HepG2 (cell line): ENCODE measurements at regions of chr1 and their contacts with region 1.

Region 1: DNA sequence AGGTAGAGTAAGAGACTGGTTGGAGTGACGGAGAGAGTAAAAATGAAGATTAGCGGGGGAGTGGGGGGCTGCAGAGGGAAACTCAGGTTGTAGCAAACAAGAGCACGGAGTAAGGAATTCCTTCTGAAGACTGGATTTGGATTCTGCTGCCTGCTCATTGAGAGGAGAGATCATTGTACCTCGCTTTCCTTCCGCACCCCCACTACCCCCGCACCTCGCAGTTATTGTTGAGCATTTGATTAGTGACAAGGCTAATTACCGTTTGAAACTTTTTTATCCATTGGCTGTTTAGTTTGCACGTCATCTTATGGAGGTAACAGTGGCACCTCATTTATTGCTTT is 463 bp downstream of the PRPF3 start:
- DNase-seq: no peak
- ATAC-seq: no peak
- H3K4me3 ChIP-seq: peak overlapping the region; percentile 83 to 92 (median 85)
- H3K27ac ChIP-seq: peak overlapping the region; percentile 84
- H3K4me1 ChIP-seq: peaks cover 20% of the 10 kb centered on the region
- H3K27me3 ChIP-seq: no peaks in the 10 kb centered on the region; a peak in 1 of 5 replicates
- CTCF ChIP-seq: no peak
- EP300 ChIP-seq: no peak
- POLR2A ChIP-seq: no peak
- RAD21 ChIP-seq: no peak

Region 2: DNA sequence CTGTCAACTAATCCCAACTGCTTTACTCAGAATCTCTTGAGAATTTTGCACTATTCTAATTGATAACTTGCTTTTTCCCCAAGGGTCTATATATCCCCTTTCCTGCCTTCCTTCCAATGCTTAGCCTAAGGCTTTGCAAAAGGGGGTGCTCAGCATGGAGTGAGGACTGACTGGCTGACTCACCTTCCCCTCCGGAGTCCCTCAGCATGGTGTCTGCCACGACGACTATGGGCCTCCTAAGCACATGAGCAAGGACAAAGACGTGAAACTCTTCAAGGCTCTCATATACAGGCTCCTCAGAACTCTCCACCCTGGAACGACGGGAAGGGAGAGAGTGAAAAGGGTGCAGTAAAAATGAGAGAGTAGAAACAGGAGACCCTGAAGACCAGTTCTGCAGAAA is 371.9 kb before region 1 on chr1:
- CTCF ChIA-PET with region 1: no interaction called
- POLR2A ChIA-PET with region 1: no interaction called
- in situ Hi-C with region 1: no loop called
- intact Hi-C with region 1: no loop called
- DNase-seq: no peak
- ATAC-seq: no peak
- H3K4me3 ChIP-seq: no peak overlapping the region
- H3K27ac ChIP-seq: no peak overlapping the region
- H3K4me1 ChIP-seq: no peaks in the 10 kb centered on the region
- H3K27me3 ChIP-seq: no peaks in the 10 kb centered on the region
- CTCF ChIP-seq: no peak
- EP300 ChIP-seq: no peak
- POLR2A ChIP-seq: no peak
- RAD21 ChIP-seq: no peak

Region 3: GRCh38 chr1:150268705-150269403 is 52.9 kb before region 1 on chr1 and contains the start of gene APH1A:
- CTCF ChIA-PET with region 1: no interaction called
- POLR2A ChIA-PET with region 1: interaction called, 13 read pairs
- in situ Hi-C with region 1: no loop called
- intact Hi-C with region 1: no loop called
- DNase-seq: peak; percentile 92
- ATAC-seq: peak; percentile 99
- H3K4me3 ChIP-seq: peak within 1 kb of the TSS; percentile 88
- H3K27ac ChIP-seq: peak within 1 kb of the TSS; percentile 66
- H3K4me1 ChIP-seq: peaks cover 24% of the 10 kb centered on the region
- H3K27me3 ChIP-seq: no peaks in the 10 kb centered on the region
- CTCF ChIP-seq: peak; percentile 23; the same call in 1 of the 2 replicates
- EP300 ChIP-seq: no peak
- POLR2A ChIP-seq: peak; percentile 45 to 53; a peak in 3 of 4 replicates
- RAD21 ChIP-seq: no peak
- total RNA-seq, gene APH1A: 87.1 and 130 TPM in 2 replicates

Region 4: DNA sequence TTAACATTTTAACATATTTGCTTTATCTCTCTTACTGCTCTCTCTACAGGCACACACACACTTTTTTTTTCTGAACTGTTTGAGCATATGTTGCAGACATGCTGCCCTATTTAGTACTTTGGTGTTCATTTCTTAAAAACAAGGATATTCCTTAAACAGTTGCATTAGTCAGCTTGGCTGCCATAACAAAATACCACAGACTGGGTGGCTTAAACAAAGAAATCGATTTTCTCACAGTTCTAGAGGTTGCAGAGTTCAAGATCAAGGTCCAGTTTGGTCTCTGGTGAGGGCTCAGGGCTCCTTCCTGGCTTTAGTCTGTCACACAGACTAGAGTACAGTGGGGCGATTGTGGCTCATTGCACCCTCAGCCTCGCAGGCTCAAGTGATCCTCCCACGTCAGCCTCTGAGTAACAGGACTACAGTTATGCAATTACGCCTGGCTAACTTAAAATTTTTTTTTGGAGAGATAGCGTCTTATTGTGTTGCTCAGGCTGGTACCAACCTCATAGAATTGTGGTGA is 88.8 kb after region 1 on chr1:
- CTCF ChIA-PET with region 1: no interaction called
- POLR2A ChIA-PET with region 1: no interaction called
- in situ Hi-C with region 1: no loop called
- intact Hi-C with region 1: loop called (anchors 10 kb)
- DNase-seq: peak; percentile 99
- ATAC-seq: peak; percentile 95
- H3K4me3 ChIP-seq: peak overlapping the region in 2 of 3 experiments; percentile 30 to 50; a peak in 3 of 6 replicates
- H3K27ac ChIP-seq: peak overlapping the region; percentile 75
- H3K4me1 ChIP-seq: peaks cover 66% of the 10 kb centered on the region
- H3K27me3 ChIP-seq: no peaks in the 10 kb centered on the region
- CTCF ChIP-seq: no peak
- EP300 ChIP-seq: peak; percentile 52 to 90; a peak in 3 of 4 replicates
- POLR2A ChIP-seq: no peak
- RAD21 ChIP-seq: 0 out of 2 replicates have a peak, but pooled peaks have one; percentile 24

Region 5: GRCh38 chr1:150420560-150421265 is 98.9 kb after region 1 on chr1:
- CTCF ChIA-PET with region 1: no interaction called
- POLR2A ChIA-PET with region 1: no interaction called
- in situ Hi-C with region 1: no loop called
- intact Hi-C with region 1: no loop called
- DNase-seq: no peak
- ATAC-seq: no peak
- H3K4me3 ChIP-seq: no peak overlapping the region
- H3K27ac ChIP-seq: no peak overlapping the region
- H3K4me1 ChIP-seq: no peaks in the 10 kb centered on the region
- H3K27me3 ChIP-seq: no peaks in the 10 kb centered on the region
- CTCF ChIP-seq: no peak
- EP300 ChIP-seq: no peak
- POLR2A ChIP-seq: no peak
- RAD21 ChIP-seq: no peak